A673 (cell line): ENCODE measurements at regions of chr6 and their contacts with region 1.

Region 1: DNA sequence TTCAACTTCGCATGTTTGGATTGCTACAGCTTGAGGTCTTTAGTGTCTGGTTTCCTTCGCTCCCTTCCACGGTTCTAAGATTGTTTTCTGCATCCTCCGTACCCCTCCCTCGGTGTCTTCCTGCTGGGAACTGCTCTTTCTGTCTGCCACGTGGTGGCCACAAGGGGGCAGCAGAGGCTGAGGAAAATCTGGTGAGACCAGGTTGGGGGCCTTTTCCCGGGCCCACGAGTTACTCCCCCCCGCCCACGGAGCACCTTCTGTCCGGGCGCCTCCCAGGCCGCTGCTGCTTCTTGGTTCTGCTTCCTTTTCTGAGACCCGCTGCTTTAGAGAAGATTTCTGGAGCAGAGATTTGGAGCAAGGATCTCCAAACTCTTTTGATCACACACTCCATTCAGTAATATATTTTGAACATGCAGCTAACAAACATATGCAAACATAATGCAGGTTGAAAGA is 21.1 kb upstream of the NOTCH4 start:
- DNase-seq: peak; percentile 87
- H3K4me3 ChIP-seq: no peak overlapping the region
- H3K27ac ChIP-seq: no peak overlapping the region
- H3K4me1 ChIP-seq: peaks cover 6% of the 10 kb centered on the region
- H3K27me3 ChIP-seq: no peaks in the 10 kb centered on the region
- CTCF ChIP-seq: peak; percentile 97

Region 2: GRCh38 chr6:32118782-32119628 is 126.0 kb before region 1 on chr6:
- CTCF ChIA-PET with region 1: no interaction called
- POLR2A ChIA-PET with region 1: no interaction called
- intact Hi-C with region 1: loop called (anchors 5 kb)
- DNase-seq: peak; percentile 84
- H3K4me3 ChIP-seq: no peak overlapping the region
- H3K27ac ChIP-seq: peak overlapping the region; percentile 25
- H3K4me1 ChIP-seq: no peaks in the 10 kb centered on the region
- H3K27me3 ChIP-seq: no peaks in the 10 kb centered on the region
- CTCF ChIP-seq: peak; percentile 93

Region 3: DNA sequence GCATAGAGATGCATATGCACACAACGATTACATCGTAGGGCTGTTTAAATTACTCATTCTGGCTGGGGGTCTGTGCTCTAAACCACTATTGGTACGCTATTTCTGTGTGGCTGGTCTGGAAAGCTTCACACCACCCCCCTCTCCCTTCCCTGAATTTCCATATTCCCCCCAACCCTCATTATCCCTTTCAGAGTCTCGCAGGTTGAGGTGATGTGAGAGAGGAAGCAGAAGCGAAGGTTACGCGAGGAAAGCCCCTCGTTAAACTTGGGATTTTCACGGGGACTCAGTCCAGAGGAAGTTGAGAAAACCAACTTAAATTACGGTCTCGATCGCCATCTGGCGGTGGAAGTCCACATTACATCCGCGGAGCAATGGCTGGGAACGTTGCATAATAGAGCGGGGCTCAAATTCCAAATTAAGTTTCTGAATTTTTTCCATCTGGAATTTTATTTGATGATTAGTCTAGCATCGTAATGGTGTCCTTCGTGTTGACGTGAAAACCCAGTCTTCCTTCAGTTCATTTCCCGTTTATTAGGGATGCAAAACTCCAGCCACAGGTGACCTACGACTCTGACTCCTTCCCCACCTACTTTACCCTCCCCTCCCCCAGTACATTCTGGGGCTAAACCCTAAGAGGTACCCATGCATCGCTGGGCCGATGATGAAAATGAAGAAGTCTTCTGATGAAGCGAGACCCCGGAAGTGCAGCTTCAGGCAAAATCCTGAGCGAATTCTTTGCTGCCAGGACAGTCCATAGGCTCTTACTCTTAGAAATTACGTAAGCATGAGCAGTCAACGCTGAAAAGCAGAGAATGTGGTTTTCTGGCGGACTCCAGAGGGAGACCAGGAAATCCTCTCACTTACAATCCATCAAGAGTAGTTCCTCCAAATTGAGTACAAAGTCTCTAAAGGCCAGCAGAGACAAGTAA is 552.1 kb after region 1 on chr6:
- CTCF ChIA-PET with region 1: no interaction called
- POLR2A ChIA-PET with region 1: no interaction called
- intact Hi-C with region 1: loop called (anchors 10 kb)
- DNase-seq: peak; percentile 78
- H3K4me3 ChIP-seq: peak overlapping the region; percentile 29
- H3K27ac ChIP-seq: no peak overlapping the region
- H3K4me1 ChIP-seq: no peaks in the 10 kb centered on the region
- H3K27me3 ChIP-seq: peaks cover 77% of the 10 kb centered on the region
- CTCF ChIP-seq: peak; percentile 87

Region 4: GRCh38 chr6:33132081-33132524 is 887.1 kb after region 1 on chr6:
- CTCF ChIA-PET with region 1: interaction called, 15 read pairs
- POLR2A ChIA-PET with region 1: no interaction called
- intact Hi-C with region 1: no loop called
- DNase-seq: no peak
- H3K4me3 ChIP-seq: no peak overlapping the region
- H3K27ac ChIP-seq: no peak overlapping the region
- H3K4me1 ChIP-seq: no peaks in the 10 kb centered on the region
- H3K27me3 ChIP-seq: no peaks in the 10 kb centered on the region
- CTCF ChIP-seq: no peak